Esophagus squamous epithelium (tissue), 5 donors: ENCODE measurements at regions of chr1 and their contacts with region 1.

Region 1: DNA sequence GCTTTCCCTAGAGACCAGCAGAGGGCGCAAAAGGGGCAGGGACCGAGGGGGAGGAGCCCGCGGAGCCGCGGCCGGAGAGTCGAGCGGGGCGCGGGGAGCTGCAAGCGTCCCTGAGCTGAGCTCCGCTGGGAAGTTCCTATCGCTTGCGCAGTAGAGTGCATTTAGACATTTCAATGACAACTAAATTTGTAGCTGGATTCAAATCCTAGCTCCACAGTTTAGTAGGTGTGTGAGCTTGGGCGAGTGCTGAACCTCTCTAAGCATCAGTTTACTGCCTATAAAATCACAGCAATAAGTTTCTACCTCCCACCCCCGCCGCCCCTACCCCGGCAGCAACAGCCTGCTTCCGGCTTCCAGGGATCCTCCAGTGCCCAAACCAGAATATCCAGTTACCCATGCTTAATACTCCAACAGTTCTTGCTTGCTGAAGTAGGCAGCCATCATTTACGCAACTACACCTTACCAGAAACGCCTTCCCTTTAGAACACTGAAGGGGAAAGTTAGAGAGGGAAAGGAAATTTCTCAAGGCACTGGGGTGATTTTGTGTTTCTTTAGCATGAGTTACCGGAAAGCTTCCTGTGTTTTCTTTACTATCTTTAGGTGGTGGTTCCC is 9.1 kb downstream of the TLR5 start:
- DNase-seq: peak; percentile 22
- H3K4me3 ChIP-seq: peak overlapping the region in 3 of 4 donors; percentile 38 to 60 (median 42)
- H3K27ac ChIP-seq: peak overlapping the region; percentile 75 to 89 (median 79)
- H3K4me1 ChIP-seq: peaks cover 39 to 61% (median 41%) of the 10 kb centered on the region in 3 donors
- H3K27me3 ChIP-seq: no peaks in the 10 kb centered on the region
- CTCF ChIP-seq: peak; percentile 91 to 97 (median 96)
- POLR2A ChIP-seq: no peak

Region 2: GRCh38 chr1:222814536-222815439 is 319.1 kb before region 1 on chr1 and contains the start of gene DISP1:
- intact Hi-C with region 1: no loop called
- DNase-seq: no peak
- H3K4me3 ChIP-seq: peak within 1 kb of the TSS; percentile 63 to 82 (median 78)
- H3K27ac ChIP-seq: peak within 1 kb of the TSS; percentile 88 to 94 (median 91)
- H3K4me1 ChIP-seq: peaks cover 0 to 35% (median 11%) of the 10 kb centered on the region in 3 donors
- H3K27me3 ChIP-seq: no peaks in the 10 kb centered on the region
- CTCF ChIP-seq: no peak
- POLR2A ChIP-seq: peak in 2 of 4 donors; percentile 26 to 57
- total RNA-seq, gene DISP1: 1.8 to 6.7 (median 3.8) TPM

Region 3: DNA sequence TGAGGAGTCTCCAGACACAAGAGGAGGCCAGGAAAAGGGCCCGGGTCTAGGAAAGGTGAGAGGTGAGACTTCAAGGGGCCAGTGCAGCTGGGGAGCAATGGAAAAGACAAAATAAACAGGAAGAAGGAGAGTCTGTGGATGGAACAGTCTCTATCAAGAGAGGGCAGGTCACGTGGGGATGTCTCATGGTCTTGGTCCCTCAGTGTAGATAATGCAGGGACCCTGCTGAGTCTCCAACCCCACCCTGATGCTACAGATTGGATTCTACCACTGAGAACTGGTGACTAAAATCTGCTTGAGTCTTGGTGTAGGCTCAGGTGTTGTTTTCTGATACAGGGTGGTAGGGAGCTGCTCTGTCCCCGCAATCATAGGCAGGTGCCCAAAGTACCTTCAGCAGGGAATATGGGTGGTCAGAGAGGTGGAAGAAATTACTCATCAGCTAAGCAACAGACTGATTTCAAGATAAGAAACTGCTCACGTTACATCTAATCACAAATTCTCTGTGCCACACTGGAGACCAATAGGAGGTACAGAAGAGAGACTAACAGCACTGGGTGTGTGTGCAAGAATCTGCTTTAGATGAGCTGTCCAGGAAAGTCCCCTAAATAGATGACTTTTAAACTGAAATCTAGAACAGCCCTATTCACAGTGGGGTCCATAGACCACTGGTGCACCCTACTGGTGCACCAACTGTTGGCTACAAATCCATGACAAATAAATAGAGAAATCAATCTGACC is 110.6 kb after region 1 on chr1:
- intact Hi-C with region 1: loop called (anchors 10 kb)
- DNase-seq: no peak
- H3K4me3 ChIP-seq: no peak overlapping the region
- H3K27ac ChIP-seq: no peak overlapping the region
- H3K4me1 ChIP-seq: peaks cover 0 to 14% (median 1%) of the 10 kb centered on the region in 3 donors
- H3K27me3 ChIP-seq: no peaks in the 10 kb centered on the region
- CTCF ChIP-seq: no peak
- POLR2A ChIP-seq: no peak

Region 4: DNA sequence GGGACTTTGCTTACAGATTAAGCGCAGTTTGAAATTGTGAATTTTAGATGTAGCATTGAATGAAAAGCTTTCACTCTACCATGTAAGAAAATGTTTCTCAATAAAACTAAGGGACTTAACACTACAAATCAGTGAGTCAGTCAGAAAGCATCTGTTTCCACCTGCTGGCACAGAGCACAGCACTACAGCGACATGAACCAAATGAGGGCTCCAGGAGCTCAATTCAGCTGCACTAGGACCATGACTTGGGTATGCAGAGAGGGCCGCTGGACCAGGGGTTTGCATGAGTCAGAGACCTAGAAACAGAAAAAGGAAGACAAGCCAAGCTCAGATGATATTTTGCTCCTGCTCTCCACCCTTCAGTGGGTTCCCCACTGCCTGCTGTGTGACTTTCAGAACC is 224.9 kb after region 1 on chr1:
- intact Hi-C with region 1: loop called (anchors 10 kb)
- DNase-seq: no peak
- H3K4me3 ChIP-seq: no peak overlapping the region
- H3K27ac ChIP-seq: peak overlapping the region in 2 of 4 donors; percentile 29 to 32
- H3K4me1 ChIP-seq: peaks cover 8 to 70% (median 19%) of the 10 kb centered on the region in 3 donors
- H3K27me3 ChIP-seq: peaks cover 0 to 18% (median 0%) of the 10 kb centered on the region in 4 donors
- CTCF ChIP-seq: peak in 3 of 6 experiments; percentile 24 to 48 (median 30)
- POLR2A ChIP-seq: no peak

Region 5: DNA sequence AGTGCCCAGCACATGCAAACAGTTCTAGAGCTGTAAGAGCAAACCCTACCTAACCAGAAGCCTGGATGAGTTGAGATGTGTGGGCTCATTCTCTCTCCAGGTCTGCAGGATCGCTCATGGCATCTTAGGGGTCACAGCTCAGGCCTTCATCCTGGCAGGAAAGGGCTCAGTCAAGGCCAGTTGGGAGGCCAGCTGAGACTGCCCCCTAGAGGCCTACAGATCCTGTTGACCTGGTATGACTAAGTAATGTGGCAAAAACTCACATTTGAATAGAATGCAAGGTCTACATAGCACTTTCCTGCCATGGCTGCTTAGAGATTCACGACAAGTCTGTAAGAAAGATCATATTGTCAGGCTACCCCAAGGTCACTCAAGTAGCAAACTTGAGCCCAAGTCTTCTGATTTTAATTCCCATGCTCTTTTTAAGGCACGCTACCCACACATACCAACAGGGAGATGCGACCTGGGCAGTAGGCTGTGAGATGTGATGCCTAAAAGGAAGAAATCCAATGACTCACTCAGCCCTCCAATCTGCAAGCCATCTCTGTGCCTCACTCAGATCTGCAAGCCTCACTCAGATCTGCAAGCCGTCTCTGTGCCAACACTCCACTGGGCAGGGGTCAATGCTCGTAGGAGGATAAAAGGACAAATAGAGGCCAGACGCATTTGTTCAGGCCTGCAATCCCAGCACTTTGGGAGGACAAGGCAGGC is 536.7 kb after region 1 on chr1:
- intact Hi-C with region 1: loop called (anchors 10 kb)
- DNase-seq: no peak
- H3K4me3 ChIP-seq: no peak overlapping the region
- H3K27ac ChIP-seq: no peak overlapping the region
- H3K4me1 ChIP-seq: peaks cover 3 to 29% (median 11%) of the 10 kb centered on the region in 3 donors
- H3K27me3 ChIP-seq: no peaks in the 10 kb centered on the region
- CTCF ChIP-seq: peak in 5 of 6 experiments; percentile 19 to 64 (median 45)
- POLR2A ChIP-seq: no peak